Activated naive CD4-positive, alpha-beta T cell treated with anti-CD3 and anti-CD28 coated beads for 36 hours (primary cell): ENCODE measurements at regions of chr12 and their contacts with region 1.

Region 1: DNA sequence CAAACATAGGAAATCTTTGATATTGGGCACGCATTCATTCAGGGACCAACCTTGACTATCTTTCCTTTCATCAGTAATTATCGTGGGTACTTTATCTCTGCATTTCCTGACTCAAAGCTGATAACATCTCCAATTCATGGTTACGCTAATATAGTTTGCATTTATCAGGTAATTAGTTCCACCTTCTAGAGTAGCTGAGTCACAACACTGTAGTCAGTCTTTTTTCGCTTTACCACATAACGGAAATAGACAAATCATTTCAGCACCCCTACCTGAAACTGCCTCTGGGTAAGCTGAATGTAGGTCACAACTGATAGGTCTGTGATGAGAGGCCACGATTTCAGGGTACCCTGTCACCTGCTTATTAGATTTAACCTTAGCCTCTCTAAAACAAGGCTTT is 36.7 kb upstream of the IL22 start:
- DNase-seq: peak; percentile 65
- H3K4me3 Mint-ChIP-seq: no peak overlapping the region
- H3K27ac Mint-ChIP-seq: no peak overlapping the region
- H3K4me1 Mint-ChIP-seq: peaks cover 41% of the 10 kb centered on the region
- H3K27me3 Mint-ChIP-seq: peaks cover 12% of the 10 kb centered on the region

Region 2: GRCh38 chr12:67804168-67804567 is 486.0 kb before region 1 on chr12:
- CTCF ChIA-PET with region 1: no interaction called
- intact Hi-C with region 1: loop called (anchors 5 kb)
- DNase-seq: peak; percentile 73
- H3K4me3 Mint-ChIP-seq: no peak overlapping the region
- H3K27ac Mint-ChIP-seq: no peak overlapping the region
- H3K4me1 Mint-ChIP-seq: peaks cover 14% of the 10 kb centered on the region
- H3K27me3 Mint-ChIP-seq: no peaks in the 10 kb centered on the region

Region 3: DNA sequence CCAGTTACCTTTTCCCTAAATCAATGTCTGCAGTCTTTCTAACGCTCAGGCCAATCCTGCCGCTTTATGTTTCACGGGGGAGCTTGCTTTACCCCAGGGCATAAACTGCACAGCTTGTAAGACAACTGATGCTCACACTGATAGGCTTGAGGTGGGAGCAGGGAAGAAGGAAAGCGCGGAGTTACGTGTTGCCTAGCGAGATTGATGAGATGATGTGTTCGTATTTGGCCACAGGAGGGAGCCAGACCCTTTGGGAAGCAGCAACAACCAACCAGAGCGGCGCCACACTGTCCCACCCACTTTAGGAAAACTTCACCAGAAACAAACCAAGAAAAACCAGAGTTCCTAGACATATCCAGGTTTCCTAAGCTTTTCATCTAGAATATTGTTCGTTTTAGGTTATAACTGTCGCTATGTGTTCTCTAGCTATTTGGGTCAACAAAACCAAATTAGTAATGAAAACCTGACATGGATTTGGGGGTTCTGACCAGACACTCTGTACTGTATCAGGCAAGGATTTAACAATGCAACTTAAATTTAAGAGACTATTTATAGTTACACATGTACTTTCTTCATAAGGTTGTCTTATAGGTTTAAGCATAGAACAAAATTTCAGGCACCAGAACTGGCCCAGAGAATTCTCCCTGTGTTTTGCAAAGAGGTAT is 66.9 kb before region 1 on chr12:
- CTCF ChIA-PET with region 1: interaction called, 13 read pairs
- intact Hi-C with region 1: no loop called
- DNase-seq: peak; percentile 88
- H3K4me3 Mint-ChIP-seq: peak overlapping the region; percentile 46
- H3K27ac Mint-ChIP-seq: no peak overlapping the region
- H3K4me1 Mint-ChIP-seq: peaks cover 6% of the 10 kb centered on the region
- H3K27me3 Mint-ChIP-seq: no peaks in the 10 kb centered on the region

Region 4: GRCh38 chr12:68279227-68280054 is 10.7 kb before region 1 on chr12:
- CTCF ChIA-PET with region 1: no interaction called
- intact Hi-C with region 1: loop called (anchors 1 kb)
- DNase-seq: no peak
- H3K4me3 Mint-ChIP-seq: no peak overlapping the region
- H3K27ac Mint-ChIP-seq: no peak overlapping the region
- H3K4me1 Mint-ChIP-seq: peaks cover 24% of the 10 kb centered on the region
- H3K27me3 Mint-ChIP-seq: peaks cover 22% of the 10 kb centered on the region

Region 5: DNA sequence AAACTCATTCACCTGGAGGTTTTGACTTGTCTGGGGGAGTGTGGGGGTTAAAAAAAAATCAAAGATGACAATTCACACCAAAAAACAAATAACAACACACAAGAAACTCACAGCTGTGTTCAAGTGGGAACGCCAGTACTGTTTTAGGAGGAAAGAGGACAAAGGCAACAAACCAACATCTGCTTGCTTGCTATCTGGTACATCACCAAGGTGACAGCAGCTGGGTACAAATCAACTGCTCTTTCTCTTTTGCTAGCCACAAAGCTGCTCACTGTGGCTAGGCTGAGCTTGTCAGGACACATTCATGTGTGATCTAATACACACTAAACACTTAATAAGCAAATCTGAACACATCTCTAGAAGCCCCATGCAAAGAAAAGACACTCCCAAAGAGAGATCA is 192.5 kb after region 1 on chr12:
- CTCF ChIA-PET with region 1: no interaction called
- intact Hi-C with region 1: loop called (anchors 2 kb)
- DNase-seq: peak; percentile 28
- H3K4me3 Mint-ChIP-seq: no peak overlapping the region
- H3K27ac Mint-ChIP-seq: peak overlapping the region; percentile 42
- H3K4me1 Mint-ChIP-seq: peaks cover 37% of the 10 kb centered on the region
- H3K27me3 Mint-ChIP-seq: no peaks in the 10 kb centered on the region